Spleen (tissue), 13 donors: ENCODE measurements at regions of chr14 and their contacts with region 1.

Region 1: GRCh38 chr14:56487090-56487667 is 92.4 kb upstream of the TMEM260 start:
- DNase-seq: no peak
- H3K4me3 ChIP-seq: no peak overlapping the region
- H3K27ac ChIP-seq: no peak overlapping the region
- H3K4me1 ChIP-seq: peaks cover 0 to 9% (median 4%) of the 10 kb centered on the region in 6 donors
- H3K27me3 ChIP-seq: no peaks in the 10 kb centered on the region
- CTCF ChIP-seq: peak in 1 of 11 experiments; percentile 6
- POLR2A ChIP-seq: no peak

Region 2: GRCh38 chr14:57317316-57317715 is 830.1 kb after region 1 on chr14:
- intact Hi-C with region 1: loop called (anchors 10 kb)
- DNase-seq: peak; percentile 76
- H3K4me3 ChIP-seq: no peak overlapping the region
- H3K27ac ChIP-seq: no peak overlapping the region
- H3K4me1 ChIP-seq: no peaks in the 10 kb centered on the region
- H3K27me3 ChIP-seq: peaks cover 0 to 29% (median 0%) of the 10 kb centered on the region in 7 donors
- CTCF ChIP-seq: peak; percentile 48 to 91 (median 85)
- POLR2A ChIP-seq: no peak